Ascending aorta (tissue), 2 donors: ENCODE measurements at regions of chr5 and their contacts with region 1.

Region 1: GRCh38 chr5:123036391-123037103 is at the start of gene PPIC:
- DNase-seq: peak; percentile 19 to 92
- H3K4me3 ChIP-seq: peak within 1 kb of the TSS; percentile 68 to 97
- H3K27ac ChIP-seq: peak within 1 kb of the TSS; percentile 94 to 96
- H3K4me1 ChIP-seq: peaks cover 0 to 9% of the 10 kb centered on the region in 2 donors
- H3K27me3 ChIP-seq: no peaks in the 10 kb centered on the region
- CTCF ChIP-seq: no peak
- total RNA-seq, gene PPIC: 29.3 TPM

Region 2: GRCh38 chr5:122774861-122775549 is 261.5 kb before region 1 on chr5 and contains the start of gene SNX2:
- intact Hi-C with region 1: loop called (anchors 2 kb)
- DNase-seq: peak; percentile 71 to 97
- H3K4me3 ChIP-seq: peak within 1 kb of the TSS; percentile 77 to 99
- H3K27ac ChIP-seq: peak within 1 kb of the TSS; percentile 79 to 94
- H3K4me1 ChIP-seq: peaks cover 0 to 15% of the 10 kb centered on the region in 2 donors
- H3K27me3 ChIP-seq: no peaks in the 10 kb centered on the region
- CTCF ChIP-seq: no peak
- total RNA-seq, gene SNX2: 15.6 TPM

Region 3: GRCh38 chr5:122896598-122897282 is 139.8 kb before region 1 on chr5:
- intact Hi-C with region 1: loop called (anchors 5 kb)
- DNase-seq: no peak
- H3K4me3 ChIP-seq: no peak overlapping the region
- H3K27ac ChIP-seq: no peak overlapping the region
- H3K4me1 ChIP-seq: no peaks in the 10 kb centered on the region
- H3K27me3 ChIP-seq: no peaks in the 10 kb centered on the region
- CTCF ChIP-seq: peak; percentile 15 to 67 (median 40)

Region 4: DNA sequence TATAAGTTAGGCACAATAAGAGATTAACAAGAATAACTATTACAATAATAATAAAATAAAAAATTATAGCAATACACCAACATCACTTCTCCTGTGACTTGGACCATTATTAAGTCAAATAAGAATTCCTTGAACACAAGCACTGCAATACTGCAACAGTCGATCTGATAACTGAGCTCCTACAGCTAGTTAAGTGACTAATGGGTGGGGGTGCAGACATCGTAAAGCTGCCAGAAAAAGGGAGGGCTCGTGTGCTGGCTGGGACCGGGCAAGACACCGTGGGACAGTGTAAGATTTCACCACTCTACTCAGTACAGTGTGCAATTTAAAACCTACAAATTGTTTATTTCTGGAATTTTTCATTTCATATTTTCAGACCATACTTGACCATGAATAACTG is 112.3 kb before region 1 on chr5:
- intact Hi-C with region 1: no loop called
- DNase-seq: no peak
- H3K4me3 ChIP-seq: no peak overlapping the region
- H3K27ac ChIP-seq: no peak overlapping the region
- H3K4me1 ChIP-seq: no peaks in the 10 kb centered on the region
- H3K27me3 ChIP-seq: no peaks in the 10 kb centered on the region
- CTCF ChIP-seq: no peak

Region 5: GRCh38 chr5:123099514-123100151 is 63.1 kb after region 1 on chr5:
- intact Hi-C with region 1: loop called (anchors 2 kb)
- DNase-seq: peak in 1 of 2 donors; percentile 73
- H3K4me3 ChIP-seq: peak overlapping the region; percentile 48 to 97
- H3K27ac ChIP-seq: peak overlapping the region; percentile 95 to 99
- H3K4me1 ChIP-seq: peaks cover 0 to 9% of the 10 kb centered on the region in 2 donors
- H3K27me3 ChIP-seq: no peaks in the 10 kb centered on the region
- CTCF ChIP-seq: peak; percentile 5 to 35 (median 32)

Region 6: DNA sequence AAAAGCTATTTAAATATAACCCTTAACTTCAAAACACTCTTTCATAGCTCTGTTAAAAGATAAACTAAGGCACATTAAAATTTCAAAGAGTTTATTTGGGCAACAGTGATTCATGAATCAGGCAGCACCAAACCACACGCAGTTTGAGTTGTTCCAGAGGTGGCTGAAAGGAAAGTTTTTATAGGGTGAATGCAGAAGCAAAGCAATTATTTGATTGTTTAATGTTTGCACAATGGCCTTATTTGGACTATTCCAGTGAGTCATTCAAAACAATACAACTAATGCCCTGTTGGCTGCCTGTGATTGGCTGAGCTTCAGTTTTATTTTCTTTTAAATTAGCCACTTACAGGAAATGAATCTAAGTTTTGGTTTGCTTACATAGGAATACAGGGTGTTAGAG is 261.3 kb after region 1 on chr5:
- intact Hi-C with region 1: loop called (anchors 5 kb)
- DNase-seq: no peak
- H3K4me3 ChIP-seq: no peak overlapping the region
- H3K27ac ChIP-seq: peak overlapping the region; percentile 64 to 68
- H3K4me1 ChIP-seq: peaks cover 0 to 7% of the 10 kb centered on the region in 2 donors
- H3K27me3 ChIP-seq: no peaks in the 10 kb centered on the region
- CTCF ChIP-seq: no peak

Region 7: DNA sequence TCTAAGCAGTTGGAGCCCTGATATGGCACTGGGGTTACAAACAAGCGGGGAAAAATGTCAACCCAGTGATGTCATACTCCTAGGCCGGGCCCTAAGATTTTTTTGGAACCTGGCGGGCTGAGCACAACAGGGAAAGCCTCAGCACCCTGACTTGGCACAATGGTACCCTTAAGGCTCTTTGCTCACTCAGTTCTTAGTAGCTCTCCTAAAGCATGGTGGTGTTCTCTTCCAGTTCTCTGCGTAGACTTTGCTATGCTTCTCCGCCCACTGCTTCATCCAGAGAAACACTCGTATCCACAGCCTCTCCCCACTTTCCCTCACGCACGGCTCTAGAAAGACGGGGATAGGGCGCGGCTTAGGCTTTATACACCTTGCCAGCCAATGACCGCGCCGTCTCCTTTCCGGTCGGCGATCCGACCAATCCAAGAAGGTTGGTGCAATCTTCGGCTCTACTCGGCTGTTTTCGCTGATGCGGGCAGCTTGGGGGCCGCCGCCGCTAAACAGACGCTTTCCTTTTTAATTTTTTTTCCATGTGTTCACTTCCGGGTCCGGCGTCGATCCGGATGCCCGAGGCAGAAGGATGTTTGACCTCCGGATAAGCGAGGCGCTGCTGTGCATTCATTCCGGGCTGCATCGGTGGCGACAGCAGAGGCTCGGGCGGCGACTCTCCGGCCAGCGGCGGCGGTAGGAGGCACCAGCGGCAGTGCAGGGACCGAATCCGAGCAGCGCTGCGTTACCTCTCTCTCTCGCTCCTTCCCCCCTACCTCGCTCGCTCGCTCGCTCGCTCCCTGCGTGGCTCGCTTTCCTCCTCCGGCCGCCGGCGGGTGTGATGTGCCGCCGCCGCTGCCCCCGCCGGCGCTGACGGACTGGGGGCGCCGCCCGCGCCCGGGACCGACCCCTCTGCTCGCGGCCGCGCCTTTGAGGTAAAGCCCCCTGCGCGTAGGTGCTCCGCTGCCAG is 475.4 kb after region 1 on chr5 and contains the start of gene CSNK1G3:
- intact Hi-C with region 1: loop called (anchors 2 kb)
- DNase-seq: peak; percentile 94 to 98
- H3K4me3 ChIP-seq: peak within 1 kb of the TSS; percentile 87 to 92
- H3K27ac ChIP-seq: peak within 1 kb of the TSS; percentile 90 to 97
- H3K4me1 ChIP-seq: peaks cover 0 to 10% of the 10 kb centered on the region in 2 donors
- H3K27me3 ChIP-seq: no peaks in the 10 kb centered on the region
- CTCF ChIP-seq: no peak
- total RNA-seq, gene CSNK1G3: 28.5 TPM